ENCODE measurements at regions of chr16 and their contacts with region 1.

Region 1: DNA sequence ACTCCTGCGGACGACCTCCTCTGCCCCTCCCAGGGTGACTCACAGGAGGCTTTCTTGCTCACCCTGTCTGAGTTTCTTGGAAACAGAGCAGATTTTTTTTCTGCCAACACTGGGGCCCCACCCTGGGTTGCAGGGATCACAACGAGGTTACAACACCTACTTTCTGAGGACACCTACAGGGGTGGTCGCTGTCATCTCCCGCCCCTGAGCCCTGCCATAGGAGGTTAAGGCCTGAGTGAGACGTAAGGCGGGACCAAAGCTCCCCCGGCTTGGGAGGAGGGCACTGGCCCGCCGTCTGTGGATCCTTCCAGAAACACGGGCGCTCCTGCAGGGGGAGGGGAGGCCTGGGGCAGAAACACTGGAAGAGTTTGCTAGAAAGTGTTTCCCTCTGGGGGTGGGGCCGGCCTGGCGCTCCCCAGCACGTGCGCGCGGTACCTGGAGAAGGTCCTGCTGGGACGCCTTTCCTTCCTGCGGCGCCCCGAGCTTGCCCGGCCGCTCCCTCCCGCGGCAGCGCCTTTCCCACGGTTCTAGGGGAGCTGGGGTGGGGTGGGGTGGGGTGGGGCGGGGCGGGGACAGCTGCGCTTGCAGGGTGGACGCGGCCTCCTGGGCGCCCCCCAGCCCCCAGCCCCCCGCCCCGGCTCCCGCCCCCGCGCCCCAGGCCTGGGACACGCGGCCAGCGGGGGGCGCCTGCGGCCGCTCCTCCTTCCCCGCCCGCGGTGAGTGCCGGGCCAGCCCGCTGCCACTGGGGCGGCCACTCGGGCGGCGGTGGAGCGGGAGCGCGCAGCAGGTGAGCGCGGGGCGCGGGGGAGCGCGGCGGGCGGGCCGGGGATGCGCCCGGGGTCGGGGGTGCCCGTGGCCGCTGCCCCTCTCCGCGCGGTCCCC is 20.7 kb upstream of the ADCY7 start:
- DNase-seq: peak; percentile 43 to 66 (median 50)
- ATAC-seq: peak; percentile 72
- H3K4me3 ChIP-seq: peak overlapping the region in 1 of 2 donors; percentile 25
- H3K27ac ChIP-seq: no peak overlapping the region
- H3K4me1 ChIP-seq: peaks cover 16% of the 10 kb centered on the region
- H3K27me3 ChIP-seq: no peaks in the 10 kb centered on the region
- CTCF ChIP-seq: peak in 3 of 7 experiments; percentile 30 to 44 (median 32)
- POLR2A ChIP-seq: no peak

Region 2: GRCh38 chr16:50093607-50094539 is 151.8 kb before region 1 on chr16:
- intact Hi-C with region 1: no loop called
- DNase-seq: peak; percentile 29 to 81 (median 44)
- ATAC-seq: peak; percentile 55
- H3K4me3 ChIP-seq: no peak overlapping the region
- H3K27ac ChIP-seq: peak overlapping the region in 2 of 4 donors; percentile 11 to 72
- H3K4me1 ChIP-seq: no peaks in the 10 kb centered on the region
- H3K27me3 ChIP-seq: no peaks in the 10 kb centered on the region
- CTCF ChIP-seq: no peak
- POLR2A ChIP-seq: no peak

Region 3: GRCh38 chr16:50354629-50355456 is 109.2 kb after region 1 on chr16:
- intact Hi-C with region 1: loop called (anchors 10 kb)
- DNase-seq: no peak
- ATAC-seq: no peak
- H3K4me3 ChIP-seq: no peak overlapping the region
- H3K27ac ChIP-seq: no peak overlapping the region
- H3K4me1 ChIP-seq: peaks cover 4% of the 10 kb centered on the region
- H3K27me3 ChIP-seq: no peaks in the 10 kb centered on the region
- CTCF ChIP-seq: peak in 6 of 7 experiments; percentile 36 to 62 (median 48)
- POLR2A ChIP-seq: no peak

Region 4: DNA sequence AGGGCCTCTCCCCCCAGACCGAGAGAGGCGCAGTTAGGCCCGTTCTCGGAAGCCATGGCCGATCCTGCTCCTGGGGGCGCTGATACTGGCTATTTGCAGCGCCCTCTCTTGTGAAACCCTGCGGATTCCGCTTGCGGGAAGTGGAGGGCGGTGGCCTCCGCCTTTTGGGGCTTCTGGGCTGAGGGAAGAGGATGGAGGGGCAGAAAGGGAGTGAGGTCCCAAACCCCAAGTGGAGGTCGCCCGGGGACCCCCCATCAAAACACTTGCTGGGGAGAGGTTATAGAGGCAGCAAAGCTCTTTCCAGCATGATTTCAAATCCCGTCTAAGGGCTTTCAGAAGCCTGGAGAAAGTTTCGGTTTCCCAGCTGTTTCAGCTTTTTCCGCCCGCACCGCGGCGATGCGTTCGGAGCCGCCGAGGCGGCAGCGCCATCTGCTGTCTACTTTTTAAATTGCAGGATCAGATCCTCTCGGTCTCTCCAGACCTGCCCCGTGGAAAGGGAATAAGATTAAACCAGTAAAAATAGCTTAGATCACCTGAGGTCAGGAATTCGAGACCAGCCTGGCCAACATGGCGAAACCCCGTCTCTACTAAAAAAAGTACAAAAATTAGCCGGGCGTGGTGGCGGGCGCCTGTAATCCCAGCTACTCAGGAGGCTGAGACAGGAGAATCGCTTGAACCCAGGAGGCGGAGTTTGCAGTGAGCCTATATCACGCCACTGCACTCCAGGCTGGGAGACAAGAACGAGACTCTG is 419.6 kb after region 1 on chr16:
- intact Hi-C with region 1: loop called (anchors 10 kb)
- DNase-seq: peak; percentile 83 to 90 (median 86)
- ATAC-seq: peak; percentile 88
- H3K4me3 ChIP-seq: no peak overlapping the region
- H3K27ac ChIP-seq: peak overlapping the region in 2 of 4 donors; percentile 1 to 54
- H3K4me1 ChIP-seq: peaks cover 18% of the 10 kb centered on the region
- H3K27me3 ChIP-seq: no peaks in the 10 kb centered on the region
- CTCF ChIP-seq: peak; percentile 86 to 95 (median 93)
- POLR2A ChIP-seq: no peak